Left cardiac atrium (tissue), 4 donors: ENCODE measurements at regions of chr7 and their contacts with region 1.

Region 1: DNA sequence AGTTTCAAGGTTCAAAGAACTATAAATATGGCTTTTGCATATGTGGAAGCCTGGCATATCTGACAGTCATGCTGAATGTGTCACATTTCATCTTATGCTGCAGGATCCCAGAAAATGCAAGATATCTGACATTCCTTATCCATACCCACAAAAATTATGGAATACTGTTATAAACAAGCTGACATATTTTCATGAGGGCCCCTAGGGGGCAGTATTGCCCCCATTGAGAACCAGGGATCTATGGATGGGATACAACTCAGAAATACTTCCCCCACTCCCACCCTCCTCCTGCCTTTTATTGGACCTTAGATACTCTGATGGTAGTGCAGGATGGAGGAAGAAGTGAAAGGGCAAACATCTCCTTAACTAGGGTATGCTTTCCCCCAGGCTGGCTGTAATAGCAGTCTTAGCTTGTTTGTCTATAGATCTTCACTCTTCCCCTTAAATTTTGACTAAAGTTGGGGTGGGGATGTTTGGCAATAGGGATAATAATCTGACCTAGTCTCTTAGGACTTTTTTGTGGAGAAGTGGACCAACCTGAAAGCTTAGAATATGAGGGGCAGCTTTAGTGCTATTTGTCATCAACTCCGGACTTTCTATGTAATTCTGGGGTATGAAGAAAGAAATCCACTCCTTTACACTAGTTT is 3.5 kb upstream of the GNGT1 start:
- DNase-seq: peak; percentile 26
- ATAC-seq: peak; percentile 38 to 48

Region 2: DNA sequence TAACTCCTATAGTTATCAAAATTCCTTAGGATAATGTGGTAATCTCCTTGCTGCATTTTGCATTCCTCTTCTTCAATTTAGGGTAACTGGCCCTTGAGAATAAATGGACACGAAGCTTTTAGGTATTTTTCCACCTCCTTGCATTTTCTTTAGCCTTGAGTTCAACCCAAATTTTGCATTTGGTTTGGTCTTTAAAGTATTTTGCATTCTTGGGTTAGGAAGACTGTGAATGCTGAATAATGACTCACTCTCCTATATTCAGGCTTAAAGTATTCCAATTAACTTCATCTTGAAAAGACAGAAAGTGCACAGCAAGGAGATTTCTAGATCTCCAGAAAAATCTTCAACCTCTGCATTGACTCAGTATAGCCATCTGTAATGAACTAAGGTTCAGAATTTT is 59.6 kb before region 1 on chr7:
- intact Hi-C with region 1: no loop called
- DNase-seq: no peak
- ATAC-seq: no peak

Region 3: GRCh38 chr7:93958216-93958615 is 55.3 kb after region 1 on chr7:
- intact Hi-C with region 1: no loop called
- DNase-seq: no peak
- ATAC-seq: no peak

Region 4: GRCh38 chr7:94004024-94004951 is 101.4 kb after region 1 on chr7 and contains the start of gene BET1:
- intact Hi-C with region 1: loop called in 1 of 2 experiments (anchors 5 kb)
- DNase-seq: peak; percentile 97
- ATAC-seq: peak; percentile 100
- total RNA-seq, gene BET1: 17.0 to 17.1 TPM

Region 5: DNA sequence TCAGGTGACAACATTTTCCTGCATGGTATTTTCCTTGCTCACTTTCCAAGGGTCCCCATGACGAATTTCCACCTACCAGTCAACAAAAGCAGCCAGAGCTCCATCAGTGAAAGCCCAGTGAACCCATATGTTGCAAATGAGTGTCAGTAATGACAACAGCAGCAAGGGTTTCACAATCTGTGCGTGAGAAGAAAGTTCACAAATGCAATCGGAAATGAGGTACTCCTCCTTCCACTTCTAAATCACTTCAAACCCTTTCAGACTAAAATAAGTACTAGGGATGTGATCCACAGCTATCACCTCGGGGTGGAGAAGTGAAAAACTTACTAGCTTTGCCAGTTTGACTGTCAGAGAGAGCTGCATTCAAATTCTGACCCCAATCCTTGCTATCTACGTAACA is 156.8 kb after region 1 on chr7:
- intact Hi-C with region 1: no loop called
- DNase-seq: no peak
- ATAC-seq: peak in 1 of 2 donors; percentile 38

Region 6: DNA sequence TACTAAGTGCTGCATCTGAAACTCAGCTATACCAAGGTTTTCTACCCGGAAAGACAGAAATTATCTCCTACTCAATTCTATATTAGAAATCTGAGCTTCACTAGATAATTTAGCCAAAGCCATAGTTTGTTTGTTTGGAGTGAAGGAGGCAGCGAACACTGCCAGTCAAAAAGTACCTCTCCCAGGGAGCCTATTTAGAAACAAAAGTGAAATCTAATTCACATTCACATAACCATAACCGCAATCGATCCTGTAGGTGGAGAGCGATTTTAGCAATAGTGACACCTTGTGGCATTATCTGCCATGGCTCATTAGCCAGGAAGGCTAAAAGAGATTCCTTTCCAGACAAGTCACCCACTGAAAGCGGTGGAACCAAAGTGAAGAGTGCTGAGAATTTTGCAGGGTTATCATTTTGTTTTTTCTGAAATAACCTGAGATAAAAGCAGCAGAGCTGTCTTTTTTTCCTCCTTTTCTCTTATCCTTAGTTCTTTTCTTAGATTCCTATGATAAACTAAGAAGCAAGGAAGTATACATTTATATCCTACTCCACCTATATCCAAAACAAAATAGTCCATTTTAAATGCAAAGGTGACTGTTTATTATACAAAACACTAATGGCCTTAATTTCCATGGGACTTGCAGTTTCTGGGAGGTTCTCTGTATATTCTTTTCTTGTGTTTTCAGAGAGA is 184.9 kb after region 1 on chr7:
- intact Hi-C with region 1: loop called (anchors 5 to 10 kb)
- DNase-seq: peak; percentile 20
- ATAC-seq: peak; percentile 68 to 77

Region 7: GRCh38 chr7:94095316-94096009 is 192.6 kb after region 1 on chr7:
- intact Hi-C with region 1: loop called in 1 of 2 experiments (anchors 10 kb)
- DNase-seq: no peak
- ATAC-seq: no peak

Region 8: DNA sequence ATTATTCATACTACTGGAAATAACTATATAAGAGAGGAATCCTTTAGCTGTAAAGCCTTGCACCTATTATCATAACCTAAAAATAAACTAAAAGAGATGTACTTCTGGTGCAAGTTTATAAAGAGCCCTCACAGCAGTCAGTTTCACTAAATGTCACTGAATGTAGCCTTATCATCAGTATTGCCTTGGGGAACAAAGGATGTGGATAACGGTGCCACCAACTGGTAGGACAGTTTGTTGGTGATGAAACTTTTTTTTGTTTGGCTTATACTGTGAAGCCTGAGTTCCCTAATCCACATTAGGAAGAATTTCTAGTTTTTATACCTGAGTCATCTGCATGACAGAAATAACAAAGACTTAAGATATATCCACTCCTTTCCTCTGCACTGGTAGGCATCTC is 373.9 kb after region 1 on chr7:
- intact Hi-C with region 1: loop called in 1 of 2 experiments (anchors 5 kb)
- DNase-seq: no peak
- ATAC-seq: peak; percentile 77